ENCODE measurements at regions of chr4 and their contacts with region 1.

Region 1: DNA sequence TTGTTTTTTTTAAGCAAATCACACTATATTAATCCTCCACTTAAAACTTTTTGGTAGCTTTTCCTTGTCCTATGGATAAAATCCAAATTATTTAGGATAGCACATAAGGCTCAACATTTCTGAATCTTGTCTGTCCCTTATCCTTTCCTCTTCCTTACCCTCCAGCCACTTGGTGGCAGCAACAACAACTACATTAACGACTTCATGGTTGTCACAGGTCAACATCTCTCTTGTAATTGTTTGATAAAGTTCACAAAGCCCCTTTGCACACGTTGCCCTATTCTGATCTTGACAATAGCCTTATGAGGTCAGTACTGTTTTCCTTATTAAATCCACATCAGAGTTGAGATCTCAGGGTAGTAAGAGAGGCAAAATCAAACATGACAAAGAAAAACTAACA is 269.0 kb upstream of the PABPC4L start:
- DNase-seq: peak; percentile 16
- ATAC-seq: peak; percentile 52; the same call in 2 of the 3 replicates
- H3K4me3 ChIP-seq: no peak overlapping the region
- H3K27ac ChIP-seq: no peak overlapping the region
- H3K4me1 ChIP-seq: no peaks in the 10 kb centered on the region
- H3K27me3 ChIP-seq: no peaks in the 10 kb centered on the region
- CTCF ChIP-seq: peak; percentile 55
- EP300 ChIP-seq: no peak
- POLR2A ChIP-seq: no peak
- RAD21 ChIP-seq: no peak

Region 2: DNA sequence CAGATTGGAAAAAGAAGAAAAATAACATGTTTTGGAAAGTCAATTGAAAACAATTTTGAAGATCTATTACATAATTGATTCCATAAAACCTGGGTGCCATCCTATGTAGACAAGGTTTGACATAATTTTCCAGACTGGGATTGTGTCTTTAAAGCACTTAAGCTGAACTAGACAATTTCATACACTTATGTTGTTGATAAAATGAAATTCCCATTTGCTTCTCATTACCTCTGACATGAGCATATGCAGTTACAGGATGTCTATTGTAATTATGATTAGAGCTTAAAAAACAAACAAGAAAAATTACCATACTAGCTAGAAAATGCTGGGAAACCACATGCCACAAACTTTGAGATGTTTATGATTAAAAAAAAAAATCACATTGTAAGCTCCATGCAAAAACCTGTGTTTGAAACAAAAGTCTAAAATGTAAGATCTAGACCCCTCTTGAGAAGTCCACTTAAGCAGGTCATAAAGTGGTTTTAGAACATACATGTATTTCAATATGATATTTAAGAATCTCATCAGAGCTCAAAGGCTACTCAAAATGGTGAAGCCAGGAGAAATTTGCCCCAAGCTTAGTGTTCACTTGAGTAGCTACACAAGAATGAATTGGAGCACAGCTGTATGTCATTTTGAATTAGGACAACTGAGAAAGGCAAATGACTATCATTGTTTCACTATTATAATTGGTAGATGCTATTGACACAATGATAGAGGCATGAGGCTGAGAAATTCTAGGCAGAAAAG is 87.9 kb before region 1 on chr4:
- CTCF ChIA-PET with region 1: no interaction called
- POLR2A ChIA-PET with region 1: no interaction called
- in situ Hi-C with region 1: no loop called
- intact Hi-C with region 1: no loop called
- DNase-seq: no peak
- ATAC-seq: no peak
- H3K4me3 ChIP-seq: no peak overlapping the region
- H3K27ac ChIP-seq: no peak overlapping the region
- H3K4me1 ChIP-seq: no peaks in the 10 kb centered on the region
- H3K27me3 ChIP-seq: no peaks in the 10 kb centered on the region
- CTCF ChIP-seq: no peak
- EP300 ChIP-seq: no peak
- POLR2A ChIP-seq: no peak
- RAD21 ChIP-seq: no peak

Region 3: GRCh38 chr4:134777606-134778005 is 307.1 kb after region 1 on chr4:
- CTCF ChIA-PET with region 1: no interaction called
- POLR2A ChIA-PET with region 1: no interaction called
- in situ Hi-C with region 1: no loop called
- intact Hi-C with region 1: loop called (anchors 1 kb)
- DNase-seq: no peak
- ATAC-seq: no peak
- H3K4me3 ChIP-seq: no peak overlapping the region
- H3K27ac ChIP-seq: no peak overlapping the region
- H3K4me1 ChIP-seq: no peaks in the 10 kb centered on the region
- H3K27me3 ChIP-seq: no peaks in the 10 kb centered on the region
- CTCF ChIP-seq: no peak
- EP300 ChIP-seq: no peak
- POLR2A ChIP-seq: no peak
- RAD21 ChIP-seq: no peak

Region 4: GRCh38 chr4:134906404-134907023 is 436.0 kb after region 1 on chr4:
- CTCF ChIA-PET with region 1: interaction called, 5 read pairs
- POLR2A ChIA-PET with region 1: no interaction called
- in situ Hi-C with region 1: no loop called
- intact Hi-C with region 1: loop called (anchors 1 kb)
- DNase-seq: no peak
- ATAC-seq: peak; percentile 76
- H3K4me3 ChIP-seq: no peak overlapping the region
- H3K27ac ChIP-seq: no peak overlapping the region
- H3K4me1 ChIP-seq: no peaks in the 10 kb centered on the region
- H3K27me3 ChIP-seq: no peaks in the 10 kb centered on the region
- CTCF ChIP-seq: peak; percentile 51
- EP300 ChIP-seq: no peak
- POLR2A ChIP-seq: no peak
- RAD21 ChIP-seq: no peak

Measured in HepG2 (cell line).